ENCODE measurements at regions of chr7 and their contacts with region 1.

Region 1: DNA sequence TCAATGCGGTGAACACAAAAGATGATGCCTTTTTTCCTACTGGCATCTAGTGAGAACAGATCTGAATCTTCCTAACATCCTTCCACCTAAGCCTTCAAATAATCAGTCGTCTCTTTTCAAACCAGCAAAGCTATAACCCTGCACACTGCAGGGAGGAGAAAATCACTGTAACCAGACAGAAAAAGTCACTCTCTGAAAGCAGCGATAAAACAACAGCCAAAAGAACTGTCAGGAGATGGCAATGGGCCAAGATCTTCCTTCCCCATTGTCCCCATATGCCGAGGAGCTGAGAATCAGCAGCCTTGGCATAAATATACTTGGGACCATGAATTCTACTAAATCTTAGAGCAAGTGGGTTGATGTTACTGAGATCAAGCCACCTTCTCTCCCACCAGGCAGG is 13.1 kb downstream of the FZD9 start:
- DNase-seq: no peak
- H3K4me3 ChIP-seq: no peak overlapping the region
- H3K27ac ChIP-seq: no peak overlapping the region
- H3K4me1 ChIP-seq: no peaks in the 10 kb centered on the region
- H3K27me3 ChIP-seq: no peaks in the 10 kb centered on the region
- CTCF ChIP-seq: no peak
- EP300 ChIP-seq: no peak
- RAD21 ChIP-seq: no peak

Region 2: GRCh38 chr7:73433924-73434700 is 12.6 kb before region 1 on chr7:
- CTCF ChIA-PET with region 1: interaction called, 67 read pairs
- POLR2A ChIA-PET with region 1: interaction called, 3 read pairs
- DNase-seq: no peak
- H3K4me3 ChIP-seq: peak overlapping the region; percentile 45 to 61; a peak in 3 of 4 replicates
- H3K27ac ChIP-seq: no peak overlapping the region
- H3K4me1 ChIP-seq: peaks cover 0 to 26% of the 10 kb centered on the region in 2 experiments; a peak in 2 of 4 replicates
- H3K27me3 ChIP-seq: no peaks in the 10 kb centered on the region
- CTCF ChIP-seq: no peak
- EP300 ChIP-seq: no peak
- RAD21 ChIP-seq: no peak

Region 3: GRCh38 chr7:73541722-73542121 is 95.0 kb after region 1 on chr7:
- CTCF ChIA-PET with region 1: no interaction called
- POLR2A ChIA-PET with region 1: no interaction called
- DNase-seq: peak; percentile 9
- H3K4me3 ChIP-seq: no peak overlapping the region
- H3K27ac ChIP-seq: no peak overlapping the region
- H3K4me1 ChIP-seq: no peaks in the 10 kb centered on the region
- H3K27me3 ChIP-seq: no peaks in the 10 kb centered on the region
- CTCF ChIP-seq: no peak
- EP300 ChIP-seq: no peak
- RAD21 ChIP-seq: no peak

Region 4: DNA sequence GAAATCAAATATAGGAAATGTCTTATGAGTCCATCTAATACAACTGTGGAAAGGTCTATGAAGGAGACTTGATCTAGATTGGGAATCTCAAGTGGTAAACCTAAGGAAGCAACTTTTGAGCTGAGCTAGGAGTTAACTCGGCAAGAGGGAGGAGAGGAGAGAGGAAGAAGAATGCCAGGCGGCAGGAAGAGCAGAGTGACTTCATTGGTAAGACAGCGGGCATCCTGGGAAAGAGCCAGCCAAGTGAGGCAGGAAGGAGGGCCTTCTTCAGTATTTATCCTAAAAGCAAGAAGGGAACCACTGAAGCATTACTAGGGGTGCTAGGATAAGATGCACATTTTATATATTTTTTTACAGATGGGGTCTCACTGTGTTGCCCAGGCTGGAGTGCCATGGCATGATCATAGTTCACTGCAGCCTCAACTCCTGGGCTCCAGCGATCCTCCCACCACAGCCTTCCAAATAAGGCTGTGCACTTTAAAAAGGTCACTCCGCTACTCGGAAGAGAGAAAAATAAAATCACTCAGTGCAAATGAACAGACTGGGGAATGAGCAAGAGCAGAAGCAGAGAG is 108.8 kb after region 1 on chr7:
- CTCF ChIA-PET with region 1: no interaction called
- POLR2A ChIA-PET with region 1: no interaction called
- DNase-seq: no peak
- H3K4me3 ChIP-seq: peak overlapping the region; percentile 61 to 84; a peak in 3 of 4 replicates
- H3K27ac ChIP-seq: peak overlapping the region in 1 of 2 experiments; percentile 94; a peak in 1 of 4 replicates
- H3K4me1 ChIP-seq: peaks cover 9 to 15% of the 10 kb centered on the region in 2 experiments; a peak in 3 of 4 replicates
- H3K27me3 ChIP-seq: no peaks in the 10 kb centered on the region
- CTCF ChIP-seq: no peak
- EP300 ChIP-seq: no peak
- RAD21 ChIP-seq: no peak

Region 5: GRCh38 chr7:73647725-73648592 is 201.3 kb after region 1 on chr7:
- CTCF ChIA-PET with region 1: no interaction called
- POLR2A ChIA-PET with region 1: no interaction called
- DNase-seq: peak; percentile 87
- H3K4me3 ChIP-seq: peak overlapping the region; percentile 40 to 41
- H3K27ac ChIP-seq: no peak overlapping the region
- H3K4me1 ChIP-seq: peaks cover 0 to 2% of the 10 kb centered on the region in 2 experiments; a peak in 1 of 4 replicates
- H3K27me3 ChIP-seq: peaks cover 93% of the 10 kb centered on the region
- CTCF ChIP-seq: peak; percentile 25
- EP300 ChIP-seq: no peak
- RAD21 ChIP-seq: peak; percentile 15; the same call in 1 of the 2 replicates

Measured in SK-N-SH (cell line).